Sigmoid colon (tissue), 7 donors: ENCODE measurements at regions of chr4 and their contacts with region 1.

Region 1: DNA sequence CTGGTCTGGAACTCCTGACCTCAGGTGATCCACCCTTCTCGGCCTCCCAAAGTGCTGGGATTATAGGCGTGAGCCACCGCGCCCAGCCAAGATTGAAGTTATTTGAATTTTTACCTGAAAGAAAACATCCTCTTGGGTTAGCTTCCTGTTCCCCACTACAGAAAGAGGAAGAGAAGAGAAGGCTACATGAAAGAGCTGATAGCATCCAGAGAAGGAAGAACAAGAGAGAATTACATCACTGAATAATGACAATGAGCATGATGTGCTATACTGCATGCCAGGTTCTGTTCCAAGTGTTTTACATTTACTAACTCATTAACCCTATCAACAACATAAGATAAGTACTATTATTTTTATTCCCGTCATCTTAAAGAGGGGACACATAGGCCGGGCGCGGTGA is 11.5 kb upstream of the TBC1D1 start:
- DNase-seq: no peak
- H3K4me3 ChIP-seq: no peak overlapping the region
- H3K27ac ChIP-seq: peak overlapping the region in 3 of 4 donors; percentile 80 to 83 (median 81)
- H3K4me1 ChIP-seq: peaks cover 0 to 76% (median 47%) of the 10 kb centered on the region in 4 donors
- H3K27me3 ChIP-seq: no peaks in the 10 kb centered on the region
- CTCF ChIP-seq: no peak
- EP300 ChIP-seq: no peak
- POLR2A ChIP-seq: no peak

Region 2: GRCh38 chr4:37434469-37434868 is 444.9 kb before region 1 on chr4:
- intact Hi-C with region 1: no loop called
- DNase-seq: no peak
- H3K4me3 ChIP-seq: no peak overlapping the region
- H3K27ac ChIP-seq: no peak overlapping the region
- H3K4me1 ChIP-seq: no peaks in the 10 kb centered on the region
- H3K27me3 ChIP-seq: no peaks in the 10 kb centered on the region
- CTCF ChIP-seq: no peak
- EP300 ChIP-seq: no peak
- POLR2A ChIP-seq: no peak

Region 3: DNA sequence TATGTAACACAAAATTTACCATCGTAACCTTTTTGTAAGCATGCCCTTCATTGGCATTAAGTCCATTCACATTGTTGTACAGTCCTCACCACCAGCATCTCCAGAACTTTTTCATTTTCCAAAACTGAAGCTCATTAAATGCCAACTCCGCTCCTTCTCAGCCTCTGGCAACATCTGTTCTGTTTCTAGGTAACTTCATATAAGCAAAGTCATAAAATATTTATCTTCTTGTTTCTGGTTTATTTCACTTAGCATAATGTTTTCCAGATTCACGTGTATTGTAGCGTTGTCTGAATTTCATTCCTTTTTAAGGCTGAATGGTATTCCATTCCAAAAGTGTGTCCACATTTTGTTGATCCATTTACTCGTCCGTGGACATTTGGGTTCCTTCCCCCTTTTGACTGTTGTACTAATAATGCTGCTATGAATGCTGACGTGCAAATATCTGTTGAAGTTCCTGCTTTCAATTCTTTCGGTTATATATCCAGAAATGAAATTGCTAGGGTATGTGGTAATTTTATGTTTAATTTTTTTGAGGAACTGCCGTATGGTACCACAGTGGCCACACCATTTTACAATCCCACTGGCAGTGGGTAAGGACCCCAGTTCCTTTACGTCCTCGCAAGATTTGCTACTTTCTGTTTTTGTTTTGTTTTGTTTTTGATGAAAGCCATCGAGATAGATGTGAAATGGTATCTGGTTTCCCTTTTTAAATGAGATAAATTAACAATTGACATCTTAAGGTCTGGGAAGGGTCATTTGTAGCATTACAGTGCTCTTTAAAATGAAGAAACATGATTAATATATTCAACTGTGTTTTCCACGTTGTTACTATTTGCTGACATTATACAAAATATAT is 144.2 kb after region 1 on chr4:
- intact Hi-C with region 1: loop called (anchors 5 kb)
- DNase-seq: no peak
- H3K4me3 ChIP-seq: peak overlapping the region in 3 of 4 donors; percentile 15 to 30 (median 18)
- H3K27ac ChIP-seq: peak overlapping the region; percentile 73 to 88 (median 80)
- H3K4me1 ChIP-seq: peaks cover 0 to 71% (median 45%) of the 10 kb centered on the region in 4 donors
- H3K27me3 ChIP-seq: no peaks in the 10 kb centered on the region
- CTCF ChIP-seq: no peak
- EP300 ChIP-seq: peak; percentile 60 to 96 (median 82)
- POLR2A ChIP-seq: no peak

Region 4: DNA sequence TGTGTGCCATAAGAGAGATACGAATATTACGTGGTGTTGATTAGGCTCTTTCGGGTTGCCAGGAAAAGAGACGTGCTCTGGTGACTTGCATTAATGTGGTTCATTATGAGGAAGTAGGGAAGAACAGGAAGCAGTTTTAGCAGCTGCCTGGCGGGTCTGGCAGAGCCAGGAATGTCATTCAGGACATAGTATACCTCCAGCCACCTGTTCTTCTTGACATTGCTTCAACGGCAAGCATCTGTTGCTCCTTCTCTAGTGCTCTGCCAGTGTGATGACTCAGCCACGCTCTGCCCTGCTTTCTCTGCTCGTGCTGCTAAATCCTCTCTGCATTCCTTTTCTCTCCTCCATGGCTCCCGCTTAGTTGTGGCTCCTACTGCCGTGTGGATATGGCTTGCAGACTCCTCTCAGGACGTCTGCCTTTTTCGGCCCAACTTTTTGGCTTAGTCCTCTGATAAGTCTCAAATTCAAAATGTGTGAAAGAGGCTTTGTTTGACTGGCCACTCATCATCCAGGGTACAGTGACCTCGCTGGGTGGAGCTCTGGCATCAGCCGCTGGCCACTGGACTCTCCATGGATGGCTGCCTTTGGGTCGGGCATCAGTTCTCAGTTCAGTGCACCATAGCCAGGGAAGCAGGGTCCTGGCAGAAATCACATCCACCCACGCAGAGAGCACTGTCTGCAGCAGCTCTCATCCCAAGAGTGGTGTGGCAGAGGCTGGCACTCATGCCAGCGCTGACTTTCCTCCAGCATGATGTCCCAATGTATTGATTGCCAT is 695.4 kb after region 1 on chr4:
- intact Hi-C with region 1: no loop called
- DNase-seq: no peak
- H3K4me3 ChIP-seq: no peak overlapping the region
- H3K27ac ChIP-seq: peak overlapping the region in 1 of 4 donors; percentile 65
- H3K4me1 ChIP-seq: peaks cover 0 to 5% (median 0%) of the 10 kb centered on the region in 4 donors
- H3K27me3 ChIP-seq: no peaks in the 10 kb centered on the region
- CTCF ChIP-seq: no peak
- EP300 ChIP-seq: no peak
- POLR2A ChIP-seq: no peak